ENCODE measurements at regions of chr7 and their contacts with region 1.

Region 1: DNA sequence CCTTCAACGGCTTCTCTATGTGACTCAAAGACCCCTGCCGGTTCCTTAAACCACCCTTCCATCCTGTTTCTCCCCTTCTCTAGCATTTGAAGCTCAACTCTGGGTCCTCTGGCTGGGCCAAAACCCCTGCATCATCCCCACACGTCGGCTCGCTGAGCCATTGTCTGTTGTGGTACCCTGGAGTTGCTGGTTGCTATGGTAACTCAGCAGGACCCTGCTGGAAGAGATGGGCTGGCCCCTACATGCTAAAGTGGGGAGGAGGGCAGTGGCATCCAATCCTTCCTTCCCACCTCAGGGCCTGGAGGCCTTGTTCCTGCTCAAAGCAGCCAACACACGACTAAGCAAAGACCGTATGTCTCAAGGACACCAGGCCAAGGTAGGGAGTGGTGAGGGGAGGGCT is 452.5 kb downstream of the PLXNA4 start:
- DNase-seq: no peak
- H3K4me3 ChIP-seq: no peak overlapping the region
- H3K27ac ChIP-seq: no peak overlapping the region
- H3K4me1 ChIP-seq: no peaks in the 10 kb centered on the region
- H3K27me3 ChIP-seq: no peaks in the 10 kb centered on the region
- CTCF ChIP-seq: no peak
- POLR2A ChIP-seq: no peak

Region 2: GRCh38 chr7:132988117-132988516 is 864.3 kb after region 1 on chr7:
- intact Hi-C with region 1: loop called (anchors 5 kb)
- DNase-seq: no peak
- H3K4me3 ChIP-seq: no peak overlapping the region
- H3K27ac ChIP-seq: no peak overlapping the region
- H3K4me1 ChIP-seq: no peaks in the 10 kb centered on the region
- H3K27me3 ChIP-seq: no peaks in the 10 kb centered on the region
- CTCF ChIP-seq: no peak
- POLR2A ChIP-seq: no peak

Measured in vagina (tissue), 2 donors.